ENCODE measurements at regions of chr1 and their contacts with region 1.

Region 1: DNA sequence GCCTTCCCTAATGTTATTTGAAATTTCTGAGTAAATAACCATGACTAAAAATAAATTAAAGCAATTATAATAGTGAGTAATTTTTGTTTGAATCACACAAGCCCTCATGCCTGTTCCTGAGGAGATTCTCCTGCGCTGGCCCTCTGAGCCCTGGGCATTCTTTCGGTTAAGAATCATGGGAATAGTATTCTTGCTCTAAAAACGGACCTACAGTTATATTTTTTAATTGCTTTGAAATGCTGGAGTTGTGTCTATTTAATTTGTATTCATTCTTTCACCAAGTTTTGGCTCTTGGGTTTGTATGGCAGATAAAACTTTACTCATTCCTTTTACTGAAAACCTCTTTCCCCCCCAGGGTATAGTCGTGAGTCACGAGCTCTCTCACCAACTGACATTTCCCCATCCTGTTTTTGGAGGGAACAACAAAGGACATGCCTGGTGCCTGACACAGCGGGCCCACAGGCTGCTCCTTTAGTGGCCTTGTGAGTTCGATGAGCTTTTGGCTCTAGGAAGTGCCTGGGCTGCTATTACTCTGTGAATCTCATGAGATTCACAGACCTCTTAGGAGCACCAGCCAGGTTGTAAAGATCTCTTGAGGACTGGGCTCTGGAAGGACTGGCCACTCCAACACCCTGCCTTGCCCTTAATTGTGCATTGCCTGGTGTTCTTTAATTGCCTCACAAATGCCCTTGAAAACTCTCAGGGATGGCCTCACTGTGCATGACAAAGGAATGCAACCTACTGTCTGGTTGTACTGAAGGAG is 58.6 kb downstream of the DDR2 start:
- DNase-seq: no peak
- ATAC-seq: peak; percentile 46; the same call in 2 of the 3 replicates
- H3K4me3 ChIP-seq: no peak overlapping the region
- H3K27ac ChIP-seq: no peak overlapping the region
- H3K4me1 ChIP-seq: no peaks in the 10 kb centered on the region
- H3K27me3 ChIP-seq: no peaks in the 10 kb centered on the region
- CTCF ChIP-seq: no peak
- EP300 ChIP-seq: no peak
- POLR2A ChIP-seq: no peak
- RAD21 ChIP-seq: no peak

Region 2: DNA sequence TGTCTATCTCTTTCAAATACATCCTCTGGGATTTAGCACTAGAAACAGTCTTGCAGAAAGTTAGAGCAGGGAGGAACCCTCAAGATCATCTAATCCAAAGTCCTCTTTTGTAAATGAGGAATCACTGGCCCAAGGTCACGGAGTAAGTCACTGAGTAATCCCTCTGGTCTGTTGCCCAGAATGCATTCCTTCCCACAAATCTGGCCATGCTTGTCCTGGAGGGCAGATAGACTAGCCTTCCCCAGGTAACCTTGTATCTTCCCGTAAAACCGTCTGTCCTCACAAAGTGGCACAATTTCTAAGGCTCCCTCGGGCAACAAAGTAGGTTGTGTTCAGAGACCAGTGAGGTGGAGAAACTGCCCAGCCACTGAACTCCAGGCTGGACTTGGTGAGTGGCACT is 12.4 kb before region 1 on chr1:
- CTCF ChIA-PET with region 1: no interaction called
- POLR2A ChIA-PET with region 1: no interaction called
- RAD21 ChIA-PET with region 1: interaction called, 3 read pairs
- SMC1A ChIA-PET with region 1: interaction called, 12 read pairs
- in situ Hi-C with region 1: no loop called
- intact Hi-C with region 1: no loop called
- DNase-seq: no peak
- ATAC-seq: no peak
- H3K4me3 ChIP-seq: no peak overlapping the region
- H3K27ac ChIP-seq: no peak overlapping the region
- H3K4me1 ChIP-seq: peaks cover 8% of the 10 kb centered on the region
- H3K27me3 ChIP-seq: no peaks in the 10 kb centered on the region
- CTCF ChIP-seq: no peak
- EP300 ChIP-seq: no peak
- POLR2A ChIP-seq: no peak
- RAD21 ChIP-seq: no peak

Region 3: DNA sequence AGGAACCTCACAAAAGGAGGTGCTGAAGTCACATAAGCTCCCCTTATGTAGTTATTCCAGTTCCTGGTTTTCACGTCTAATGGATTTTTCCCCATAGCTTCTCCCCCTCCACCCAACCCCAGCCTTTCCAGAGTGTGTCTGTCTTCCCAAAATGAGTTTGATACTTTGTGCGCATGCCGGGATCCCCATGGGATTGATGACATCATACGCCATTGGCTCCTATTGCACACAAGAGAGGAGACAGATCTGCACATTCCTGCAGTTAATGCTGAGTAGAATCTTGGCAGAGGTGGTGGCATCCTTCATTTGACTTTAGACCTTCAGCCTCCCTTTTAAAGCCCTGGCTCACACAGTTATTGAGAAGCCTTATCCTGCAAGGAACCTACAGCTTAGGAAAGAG is 12.9 kb after region 1 on chr1:
- CTCF ChIA-PET with region 1: interaction called, 9 read pairs
- POLR2A ChIA-PET with region 1: interaction called, 7 read pairs
- RAD21 ChIA-PET with region 1: interaction called, 9 read pairs
- SMC1A ChIA-PET with region 1: interaction called, 41 read pairs
- in situ Hi-C with region 1: no loop called
- intact Hi-C with region 1: no loop called
- DNase-seq: no peak
- ATAC-seq: no peak
- H3K4me3 ChIP-seq: no peak overlapping the region
- H3K27ac ChIP-seq: no peak overlapping the region
- H3K4me1 ChIP-seq: 0 out of 2 replicates have a peak, but pooled peaks cover 5% of the 10 kb centered on the region
- H3K27me3 ChIP-seq: no peaks in the 10 kb centered on the region
- CTCF ChIP-seq: no peak
- EP300 ChIP-seq: no peak
- POLR2A ChIP-seq: no peak
- RAD21 ChIP-seq: no peak